ENCODE measurements at regions of chr14 and their contacts with region 1.

Region 1: GRCh38 chr14:64338616-64339316 is 44.6 kb upstream of the ESR2 start:
- DNase-seq: peak; percentile 95

Region 2: DNA sequence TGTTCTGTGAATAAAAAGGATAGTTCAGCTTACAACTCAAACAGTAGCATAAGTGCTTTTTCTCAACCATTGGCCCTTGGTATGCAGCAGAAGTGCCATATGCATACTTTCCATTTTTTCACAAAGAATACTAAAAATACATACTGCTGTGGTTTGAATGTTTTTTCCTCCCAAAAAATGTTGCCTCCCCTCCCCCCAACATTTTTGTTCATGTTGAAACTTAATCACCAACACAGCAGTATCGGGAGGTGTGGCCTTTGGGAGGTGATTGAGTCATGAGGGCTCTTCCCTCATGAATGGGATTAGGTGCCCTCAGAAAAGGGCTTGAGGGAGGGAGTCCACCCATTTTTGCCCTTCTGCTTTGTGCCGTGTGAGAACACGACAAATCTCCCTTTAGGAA is 243.1 kb before region 1 on chr14:
- CTCF ChIA-PET with region 1: no interaction called
- POLR2A ChIA-PET with region 1: no interaction called
- DNase-seq: no peak

Region 3: GRCh38 chr14:64244279-64244678 is 94.5 kb before region 1 on chr14:
- CTCF ChIA-PET with region 1: no interaction called
- POLR2A ChIA-PET with region 1: no interaction called
- DNase-seq: no peak

Region 4: GRCh38 chr14:64303471-64303917 is 35.3 kb before region 1 on chr14:
- CTCF ChIA-PET with region 1: interaction called, 3 read pairs
- POLR2A ChIA-PET with region 1: interaction called, 11 read pairs
- DNase-seq: peak; percentile 61

Region 5: DNA sequence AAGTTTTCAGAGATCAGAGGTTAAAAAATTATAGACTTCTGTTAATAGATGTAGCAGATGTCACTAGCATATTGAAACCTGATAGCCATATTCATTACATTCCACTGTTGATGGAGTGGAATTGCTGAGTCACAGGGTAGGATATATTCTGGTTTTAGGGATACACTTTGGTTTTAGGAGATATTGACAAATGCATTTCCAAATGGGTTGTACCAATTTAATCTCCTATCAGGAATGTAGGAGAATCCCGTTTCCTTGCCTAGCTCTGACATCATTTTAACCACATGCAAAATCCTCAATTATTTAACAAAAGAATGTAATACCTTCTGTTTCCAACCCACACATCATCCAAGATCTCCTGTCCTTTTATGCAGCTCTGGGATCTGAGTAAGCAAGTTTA is 13.9 kb before region 1 on chr14:
- CTCF ChIA-PET with region 1: interaction called, 3 read pairs
- POLR2A ChIA-PET with region 1: interaction called, 14 read pairs
- DNase-seq: no peak

Region 6: DNA sequence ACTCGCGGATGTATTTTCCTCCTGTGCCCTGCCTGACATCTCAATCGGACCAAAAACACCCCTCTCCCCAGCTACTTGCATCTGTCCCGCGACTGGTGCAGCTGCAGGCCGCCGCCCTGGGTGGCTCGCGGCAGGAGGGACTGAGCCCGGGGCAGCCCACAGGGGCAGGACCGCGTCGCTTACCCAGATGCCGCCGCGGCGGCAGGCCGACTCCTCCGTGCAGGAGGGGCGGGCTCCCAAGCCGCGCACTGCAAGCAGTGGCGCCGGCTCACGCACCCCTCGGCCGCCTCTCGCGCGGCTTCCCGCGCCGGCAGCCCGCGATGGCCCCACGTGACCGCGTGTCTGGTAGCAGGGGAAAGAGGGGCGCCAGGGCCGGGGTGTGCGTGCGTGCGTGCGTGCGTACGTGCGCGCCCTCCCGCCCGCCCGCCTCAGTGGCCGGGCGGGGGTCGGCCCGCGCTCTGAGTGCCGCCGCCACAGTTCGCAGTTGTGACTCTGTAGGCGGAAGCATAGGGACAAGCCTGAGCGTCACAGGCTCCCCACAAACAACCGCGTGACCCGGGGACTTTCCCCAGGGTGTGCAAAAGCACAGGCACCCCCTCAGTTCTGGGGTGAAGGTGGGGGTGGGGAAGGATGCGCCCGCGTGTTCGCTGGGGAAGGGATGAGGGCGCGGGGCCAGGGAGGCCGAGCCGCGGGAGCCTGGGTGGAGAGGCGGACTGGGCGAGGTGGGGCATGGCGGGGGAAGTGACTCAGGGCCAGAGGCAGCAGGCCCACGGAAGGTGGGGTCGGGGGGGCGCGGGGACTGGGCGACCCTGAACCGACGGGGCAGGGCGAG is 164.9 kb after region 1 on chr14 and contains the start of gene ZBTB25:
- CTCF ChIA-PET with region 1: no interaction called
- POLR2A ChIA-PET with region 1: interaction called, 17 read pairs
- DNase-seq: peak; percentile 80